ENCODE measurements at regions of chr10 and their contacts with region 1.

Region 1: DNA sequence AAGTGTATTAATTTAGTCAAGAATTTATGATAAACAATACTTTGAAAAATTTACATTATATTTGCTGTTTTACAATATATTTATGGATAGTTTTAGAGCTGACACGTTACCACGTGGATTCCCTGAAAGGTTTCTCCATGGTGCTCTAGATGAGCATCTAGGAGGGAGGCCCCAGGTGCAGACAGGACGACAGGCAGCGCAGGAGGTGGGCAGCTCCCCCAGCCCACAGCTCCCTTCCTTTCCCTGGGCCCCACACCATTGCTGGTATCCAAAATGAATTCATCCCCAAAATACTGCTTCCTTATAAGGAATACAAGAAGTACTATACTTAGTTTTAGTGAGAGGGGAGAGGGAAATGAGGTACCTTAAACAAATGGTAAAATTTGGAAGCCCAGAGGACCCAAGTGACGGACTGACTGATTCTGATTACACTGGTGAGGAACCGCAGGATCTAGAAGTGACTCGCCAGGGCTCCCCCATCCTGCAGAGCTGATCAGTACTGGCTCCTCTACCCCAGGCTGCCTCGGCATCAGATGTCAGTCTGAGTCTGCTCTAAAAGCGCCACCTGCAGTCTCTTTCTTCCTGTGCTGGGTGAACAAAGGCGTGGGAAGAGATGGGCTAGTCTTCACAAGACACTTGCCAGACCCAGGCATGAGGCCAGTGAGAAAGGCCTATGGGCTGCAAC is 89.2 kb downstream of the DLG5 start:
- DNase-seq: peak; percentile 89
- ATAC-seq: peak; percentile 92
- H3K4me3 Mint-ChIP-seq: no peak overlapping the region
- H3K27ac Mint-ChIP-seq: no peak overlapping the region
- H3K4me1 Mint-ChIP-seq: peaks cover 18% of the 10 kb centered on the region
- H3K27me3 Mint-ChIP-seq: no peaks in the 10 kb centered on the region

Region 2: GRCh38 chr10:77165445-77166208 is 671.8 kb before region 1 on chr10:
- CTCF ChIA-PET with region 1: no interaction called
- POLR2A ChIA-PET with region 1: no interaction called
- intact Hi-C with region 1: loop called in 1 of 2 experiments (anchors 10 kb)
- DNase-seq: peak; percentile 55
- ATAC-seq: peak; percentile 66
- H3K4me3 Mint-ChIP-seq: no peak overlapping the region
- H3K27ac Mint-ChIP-seq: no peak overlapping the region
- H3K4me1 Mint-ChIP-seq: no peaks in the 10 kb centered on the region
- H3K27me3 Mint-ChIP-seq: peaks cover 18% of the 10 kb centered on the region

Region 3: DNA sequence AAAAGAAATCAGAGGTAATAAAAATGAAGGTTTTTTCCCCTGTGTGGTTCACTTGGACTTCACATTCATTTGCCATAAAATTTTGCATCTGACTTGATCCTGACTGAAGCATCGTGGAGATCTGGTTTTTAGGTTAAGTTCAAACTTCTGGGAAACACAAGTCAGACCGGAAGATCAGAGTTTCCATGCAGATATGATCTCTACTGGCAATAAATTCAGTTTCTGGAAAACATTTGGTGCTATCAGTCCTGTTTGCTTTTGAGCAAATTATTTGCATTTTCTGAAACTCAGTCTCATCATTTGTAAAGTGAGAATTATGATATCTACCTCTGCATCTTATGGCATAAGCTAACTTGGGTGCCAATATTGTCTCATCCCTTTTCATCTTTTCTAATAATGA is 118.4 kb before region 1 on chr10:
- CTCF ChIA-PET with region 1: interaction called, 7 read pairs
- POLR2A ChIA-PET with region 1: no interaction called
- intact Hi-C with region 1: loop called (anchors 1 kb)
- DNase-seq: no peak
- ATAC-seq: no peak
- H3K4me3 Mint-ChIP-seq: no peak overlapping the region
- H3K27ac Mint-ChIP-seq: no peak overlapping the region
- H3K4me1 Mint-ChIP-seq: peaks cover 2% of the 10 kb centered on the region
- H3K27me3 Mint-ChIP-seq: peaks cover 5% of the 10 kb centered on the region

Region 4: DNA sequence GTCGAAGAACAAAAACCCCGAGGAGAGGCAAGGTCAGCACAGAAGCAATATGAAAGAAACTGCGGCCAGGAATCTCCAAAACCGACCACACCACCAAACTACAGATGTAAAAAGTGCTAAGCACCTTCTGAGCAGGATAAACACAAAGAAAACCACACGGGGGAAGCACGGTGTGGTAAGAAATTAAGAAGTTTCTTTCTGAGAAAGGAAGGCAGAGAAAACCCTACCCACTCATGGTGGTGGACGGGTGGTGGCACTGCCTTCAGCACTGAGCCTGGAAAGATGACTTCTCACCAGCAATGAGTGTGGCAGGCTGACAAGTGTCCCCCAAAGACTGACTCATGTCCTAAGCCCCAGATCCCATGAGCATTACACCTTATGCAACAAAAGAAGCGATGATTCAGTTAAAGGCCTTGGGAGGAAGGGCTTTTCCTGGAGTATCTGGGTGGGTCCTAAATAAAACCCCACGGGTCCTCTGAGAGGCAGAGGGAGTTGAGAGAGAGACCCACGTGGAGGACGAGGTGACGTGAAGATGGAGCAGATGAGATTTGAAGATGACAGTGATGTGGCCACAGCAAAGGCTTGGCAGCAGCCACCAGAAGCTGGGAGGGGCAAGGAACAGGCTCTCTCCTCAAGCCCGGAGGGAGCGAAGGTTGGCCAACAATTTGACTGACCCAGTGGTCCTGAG is 35.8 kb before region 1 on chr10:
- CTCF ChIA-PET with region 1: interaction called, 3 read pairs
- POLR2A ChIA-PET with region 1: no interaction called
- intact Hi-C with region 1: loop called (anchors 1 kb)
- DNase-seq: peak; percentile 74
- ATAC-seq: peak; percentile 96
- H3K4me3 Mint-ChIP-seq: no peak overlapping the region
- H3K27ac Mint-ChIP-seq: peak overlapping the region; percentile 7
- H3K4me1 Mint-ChIP-seq: peaks cover 16% of the 10 kb centered on the region
- H3K27me3 Mint-ChIP-seq: no peaks in the 10 kb centered on the region